ENCODE measurements at regions of chr3 and their contacts with region 1.

Region 1: GRCh38 chr3:159726231-159726964 is 262.2 kb upstream of the IL12A start:
- DNase-seq: peak; percentile 75 to 91
- H3K4me3 ChIP-seq: no peak overlapping the region
- H3K27ac ChIP-seq: no peak overlapping the region
- H3K4me1 ChIP-seq: peaks cover 16% of the 10 kb centered on the region
- H3K27me3 ChIP-seq: no peaks in the 10 kb centered on the region
- CTCF ChIP-seq: no peak

Region 2: DNA sequence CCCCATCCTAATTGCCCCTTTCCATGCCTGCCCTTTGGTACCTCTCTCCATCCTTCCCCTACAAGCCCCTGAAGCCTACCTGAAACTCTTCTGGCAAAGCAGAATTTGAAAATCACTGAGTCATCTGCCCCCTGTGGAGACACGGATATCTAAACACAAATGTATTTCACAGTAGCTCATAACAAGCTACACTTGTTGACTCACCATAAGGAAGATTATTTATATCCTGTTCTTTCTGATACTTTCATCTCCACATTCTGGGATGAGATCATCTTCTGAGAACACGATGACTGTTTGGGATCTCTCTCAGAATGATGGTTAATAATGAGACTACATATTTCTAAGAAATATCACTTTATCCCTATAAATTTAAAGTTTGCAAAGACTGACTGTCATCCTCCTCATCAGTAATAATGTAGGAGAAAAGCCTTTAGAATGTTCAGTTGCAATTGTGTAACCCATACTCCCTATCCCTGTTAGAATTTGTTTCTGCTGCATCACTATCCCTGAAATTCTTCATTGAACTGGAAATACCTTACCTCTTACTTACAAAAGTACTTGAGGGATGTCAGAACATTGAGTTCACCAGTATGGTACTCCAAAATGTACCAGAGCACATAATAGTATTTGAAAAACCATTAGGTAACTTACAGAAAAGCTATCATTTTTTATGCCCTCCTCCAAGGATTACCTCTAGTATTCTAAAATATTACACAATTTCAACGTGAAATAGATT is 146.1 kb after region 1 on chr3:
- CTCF ChIA-PET with region 1: interaction called, 5 read pairs
- POLR2A ChIA-PET with region 1: interaction called, 10 read pairs
- intact Hi-C with region 1: no loop called
- DNase-seq: peak; percentile 56 to 96
- H3K4me3 ChIP-seq: no peak overlapping the region
- H3K27ac ChIP-seq: peak overlapping the region; percentile 82
- H3K4me1 ChIP-seq: peaks cover 23% of the 10 kb centered on the region
- H3K27me3 ChIP-seq: no peaks in the 10 kb centered on the region
- CTCF ChIP-seq: peak; percentile 54; the same call in 1 of the 2 replicates